Activated CD8-positive, alpha-beta memory T cell treated with anti-CD3 and anti-CD28 coated beads, Interleukin-2, amount 10 ng/mL, durations not matched to agents 7 days and 5 days (primary cell): ENCODE measurements at regions of chr10 and their contacts with region 1.

Region 1: DNA sequence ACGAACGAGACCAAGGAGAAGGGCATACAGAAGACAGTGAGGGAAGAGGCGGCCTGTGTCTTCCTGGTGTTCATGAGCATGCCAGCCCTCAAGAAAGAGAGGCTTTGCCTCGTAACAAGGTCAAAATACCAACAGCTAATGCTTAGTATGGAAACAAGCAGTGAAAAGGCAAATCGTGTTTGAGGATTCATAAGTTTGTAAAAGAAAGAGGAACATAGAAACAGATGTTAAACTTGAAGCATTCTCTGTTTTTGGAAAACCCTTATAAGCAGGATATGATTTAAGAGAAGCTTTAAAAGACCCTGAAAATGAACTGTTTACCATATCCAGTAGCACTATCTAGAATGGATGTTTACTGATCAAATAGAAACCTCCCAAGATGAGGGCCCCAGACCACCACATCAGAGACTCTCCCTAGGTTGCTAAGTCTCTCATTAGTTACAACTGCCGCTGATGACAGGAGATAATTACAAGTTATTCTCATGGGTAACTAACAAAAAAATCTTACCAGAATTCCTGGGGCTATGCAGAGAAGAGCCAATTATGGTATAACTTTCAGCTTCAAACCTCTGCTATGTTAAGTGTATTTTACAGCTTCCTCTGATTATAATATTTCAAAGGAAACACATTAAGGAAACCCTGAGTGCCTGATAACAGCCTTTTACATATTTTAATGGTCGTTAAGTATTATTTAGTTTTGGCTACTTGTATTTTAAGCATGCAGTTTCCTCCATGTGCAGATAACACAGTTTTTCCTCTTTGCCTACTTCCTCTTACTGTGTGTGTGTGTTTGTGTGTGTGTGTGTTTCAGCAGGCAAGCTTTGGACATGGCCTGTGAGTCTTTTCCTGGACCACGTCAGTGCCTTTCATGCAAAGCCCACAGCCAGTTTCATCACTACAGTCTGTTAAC is 17.9 kb downstream of the JCAD start:
- DNase-seq: no peak
- ATAC-seq: no peak
- H3K4me3 Mint-ChIP-seq: no peak overlapping the region
- H3K27ac Mint-ChIP-seq: no peak overlapping the region
- H3K4me1 Mint-ChIP-seq: peaks cover 25% of the 10 kb centered on the region
- H3K27me3 Mint-ChIP-seq: peaks cover 46% of the 10 kb centered on the region

Region 2: GRCh38 chr10:30027057-30028005 is 14.1 kb before region 1 on chr10:
- CTCF ChIA-PET with region 1: interaction called, 11 read pairs
- DNase-seq: peak; percentile 97
- ATAC-seq: peak; percentile 93
- H3K4me3 Mint-ChIP-seq: peak overlapping the region; percentile 66
- H3K27ac Mint-ChIP-seq: peak overlapping the region; percentile 84
- H3K4me1 Mint-ChIP-seq: peaks cover 49% of the 10 kb centered on the region
- H3K27me3 Mint-ChIP-seq: peaks cover 40% of the 10 kb centered on the region

Region 3: DNA sequence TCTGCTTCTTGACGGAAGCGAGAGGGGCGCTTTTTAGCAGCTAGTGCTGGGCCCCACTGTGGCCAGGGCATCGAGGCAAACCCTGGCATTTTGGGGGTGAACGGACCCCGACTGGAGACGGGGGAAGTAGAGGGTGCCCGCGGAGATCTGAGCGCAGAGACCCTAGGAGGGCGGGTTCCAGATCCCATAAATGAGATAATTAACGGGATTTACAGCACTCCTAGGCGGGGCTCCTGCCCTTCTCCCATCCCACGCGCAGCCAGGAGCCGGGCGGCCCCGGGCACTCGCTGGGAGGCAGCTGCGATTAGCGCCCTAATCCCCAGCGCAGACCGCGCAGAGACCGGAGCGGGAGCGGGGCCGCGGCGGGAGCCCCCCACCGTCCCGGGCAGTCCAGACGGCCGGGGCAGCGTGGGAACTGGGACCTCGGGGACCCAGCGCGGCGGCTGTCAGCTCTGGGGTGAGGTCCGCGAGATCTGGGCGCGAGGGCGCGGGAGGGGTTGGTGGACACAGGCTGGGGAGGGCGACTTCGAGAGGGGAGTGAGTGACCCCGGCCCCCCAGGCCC is 17.2 kb after region 1 on chr10:
- CTCF ChIA-PET with region 1: no interaction called
- DNase-seq: no peak
- ATAC-seq: peak; percentile 13
- H3K4me3 Mint-ChIP-seq: peak overlapping the region; percentile 20
- H3K27ac Mint-ChIP-seq: no peak overlapping the region
- H3K4me1 Mint-ChIP-seq: peaks cover 9% of the 10 kb centered on the region
- H3K27me3 Mint-ChIP-seq: peaks cover 85% of the 10 kb centered on the region